Head of caudate nucleus (tissue), 42 donors: ENCODE measurements at regions of chr9 and their contacts with region 1.

Region 1: GRCh38 chr9:132800038-132800648 is 77.9 kb downstream of the AK8 start:
- DNase-seq: peak; percentile 31 to 92 (median 70)

Region 2: DNA sequence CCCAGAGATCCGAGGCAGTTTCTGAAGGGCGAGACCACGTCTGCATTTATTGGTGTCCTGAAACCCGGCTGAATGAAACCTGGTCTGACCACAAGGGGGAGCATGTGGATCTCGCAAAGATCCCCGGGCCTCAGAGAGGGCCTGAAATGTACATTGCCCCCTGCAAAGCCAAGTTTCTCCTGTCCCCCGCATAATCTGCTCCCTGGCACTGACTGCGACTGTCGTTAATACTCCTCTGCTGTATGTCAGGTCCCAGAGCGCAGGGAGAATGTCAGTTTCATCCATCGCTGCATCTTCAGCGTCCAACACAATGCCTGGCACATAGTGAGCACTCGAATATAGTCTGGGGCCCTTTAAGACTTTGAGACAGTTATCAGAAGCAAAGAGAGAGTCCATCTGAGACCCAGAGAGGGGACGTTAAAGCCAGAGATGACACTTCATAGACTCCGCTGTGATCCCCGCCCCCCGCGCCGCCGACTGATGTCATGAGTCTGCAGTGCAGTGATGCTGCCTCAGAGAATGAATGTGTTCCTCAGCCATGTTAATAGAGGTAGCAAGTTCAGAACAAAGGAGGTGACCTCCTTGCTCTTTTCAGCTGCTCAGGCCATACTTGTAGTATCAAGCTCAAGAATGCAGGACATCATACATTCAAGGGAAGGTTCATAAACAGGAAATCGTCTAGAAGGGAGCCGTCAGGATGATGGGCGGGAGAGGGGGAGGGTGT is 292.2 kb before region 1 on chr9:
- intact Hi-C with region 1: loop called (anchors 5 kb)
- DNase-seq: peak; percentile 21 to 90 (median 74)

Region 3: GRCh38 chr9:133492061-133493021 is 692.2 kb after region 1 on chr9:
- intact Hi-C with region 1: no loop called
- DNase-seq: no peak